AG04449 (cell line): ENCODE measurements at regions of chr3 and their contacts with region 1.

Region 1: DNA sequence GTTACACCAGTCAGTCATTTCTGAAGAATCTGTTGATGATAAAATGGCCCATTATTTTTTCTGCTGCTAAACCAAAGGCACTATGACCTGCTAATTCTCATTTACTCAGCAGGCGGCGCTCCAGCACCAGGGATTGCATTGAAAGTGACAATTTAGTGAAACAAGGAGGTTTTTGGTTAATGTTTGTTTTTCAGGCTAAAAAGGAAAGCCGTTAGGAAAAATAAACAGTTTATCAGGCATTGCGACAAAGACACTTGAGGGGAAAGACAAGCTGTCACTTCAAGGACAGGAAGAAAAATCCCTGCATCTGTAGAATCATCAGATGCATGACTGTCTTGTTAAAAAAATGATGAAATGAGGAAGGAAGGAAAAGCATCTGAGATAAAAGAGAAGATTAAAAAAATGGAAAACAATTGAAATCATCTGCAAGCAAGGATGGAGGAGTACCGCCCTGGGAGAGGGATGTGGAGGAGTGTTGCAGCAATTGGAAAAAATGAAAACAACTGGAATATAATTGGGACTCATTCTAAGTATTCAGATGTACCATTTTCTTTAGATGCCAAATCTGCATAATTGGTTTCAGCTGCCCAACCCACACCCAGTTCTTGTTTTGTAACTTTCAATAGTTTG is 54.0 kb downstream of the NR1D2 start:
- DNase-seq: no peak
- H3K4me3 ChIP-seq: no peak overlapping the region
- CTCF ChIP-seq: peak; percentile 83

Region 2: DNA sequence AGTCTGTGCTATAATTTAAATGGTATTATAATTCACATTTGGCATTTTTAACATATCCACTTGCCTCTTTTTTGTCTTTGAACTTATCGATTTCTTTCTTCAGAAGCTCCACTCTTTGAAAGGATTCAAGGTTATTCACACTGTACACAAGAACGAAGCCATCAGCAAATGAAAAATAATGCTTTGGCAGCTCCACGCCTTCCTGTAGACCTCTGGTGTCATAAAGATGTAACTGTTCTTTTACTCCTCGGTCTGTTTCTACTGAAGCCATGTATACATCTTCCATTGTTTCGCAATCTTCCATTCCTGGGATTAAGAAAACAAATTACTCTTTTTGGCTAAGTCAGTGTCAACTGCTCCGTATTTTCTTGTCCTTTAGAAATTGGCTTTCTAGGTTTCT is 98.4 kb before region 1 on chr3:
- CTCF ChIA-PET with region 1: no interaction called
- POLR2A ChIA-PET with region 1: no interaction called
- DNase-seq: no peak
- H3K4me3 ChIP-seq: no peak overlapping the region
- CTCF ChIP-seq: no peak

Region 3: DNA sequence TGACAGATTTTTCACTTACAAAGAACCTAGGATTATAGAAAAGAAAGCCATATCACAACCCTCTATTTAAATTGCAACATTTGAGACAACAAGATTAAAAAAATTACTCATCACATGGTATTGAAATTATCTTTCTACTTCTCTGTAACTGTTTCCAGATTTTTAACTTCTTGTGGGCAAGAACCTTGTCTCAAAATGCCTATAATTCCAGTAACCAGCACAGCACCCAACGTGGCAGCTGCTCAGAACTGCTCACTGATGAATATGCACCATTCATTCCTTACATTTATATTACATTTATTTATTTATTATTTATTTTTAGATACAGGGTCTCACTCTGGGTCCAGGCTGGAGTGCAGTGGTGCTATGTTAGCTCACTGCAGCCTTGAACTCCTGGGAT is 279.4 kb after region 1 on chr3:
- CTCF ChIA-PET with region 1: no interaction called
- POLR2A ChIA-PET with region 1: no interaction called
- DNase-seq: no peak
- H3K4me3 ChIP-seq: no peak overlapping the region
- CTCF ChIP-seq: no peak

Region 4: GRCh38 chr3:24680214-24680967 is 681.3 kb after region 1 on chr3:
- CTCF ChIA-PET with region 1: interaction called, 37 read pairs
- POLR2A ChIA-PET with region 1: no interaction called
- DNase-seq: no peak
- H3K4me3 ChIP-seq: no peak overlapping the region
- CTCF ChIP-seq: peak; percentile 82